Natural killer cell (primary cell): ENCODE measurements at regions of chr2 and their contacts with region 1.

Region 1: DNA sequence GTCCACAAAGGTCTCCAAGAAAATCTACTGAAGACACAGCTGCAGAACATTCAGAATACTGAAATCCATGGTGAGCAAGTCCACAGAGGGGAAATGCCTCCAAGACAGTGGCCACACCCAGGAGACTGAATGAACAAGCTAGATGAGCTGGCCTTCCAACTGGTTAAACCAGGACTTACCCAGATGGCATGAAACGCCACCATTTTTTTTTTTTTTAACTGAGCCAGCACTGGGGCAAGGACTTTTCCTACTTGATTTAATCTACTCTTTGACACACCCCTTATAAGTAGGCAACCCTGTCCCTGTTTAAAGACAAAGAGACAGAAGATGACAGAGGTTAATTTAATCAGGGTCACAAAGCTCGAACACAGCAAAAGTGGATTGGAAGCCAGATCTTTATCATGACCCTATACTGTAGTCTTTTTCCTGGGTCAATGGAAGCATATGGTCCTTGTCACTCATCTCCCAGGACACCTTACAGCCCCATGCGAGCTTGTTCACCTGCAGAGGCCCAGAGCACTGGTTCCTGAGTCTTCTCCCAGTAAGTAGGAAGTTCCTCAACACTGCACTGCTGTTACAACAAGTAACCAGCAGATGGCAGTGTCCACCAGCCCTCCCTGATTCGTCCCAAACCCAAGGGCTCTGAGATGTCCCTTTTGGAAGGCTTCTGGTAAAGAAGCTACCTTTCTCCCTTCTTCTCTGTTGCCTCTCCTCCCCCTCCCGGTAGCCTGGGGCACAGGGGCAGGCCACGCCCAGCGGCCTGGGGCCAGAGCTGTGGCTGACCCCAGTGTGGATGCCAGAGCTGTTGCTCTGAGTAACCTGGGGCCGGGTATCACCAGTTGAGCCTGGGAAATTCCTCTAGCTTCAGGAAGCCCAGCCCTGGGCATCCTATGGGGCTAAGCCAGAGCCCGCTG is 5.6 kb upstream of the GDF7 start:
- DNase-seq: peak; percentile 51 to 87
- ATAC-seq: peak; percentile 85 to 95 (median 89)
- H3K4me3 ChIP-seq: no peak overlapping the region
- H3K4me3 Mint-ChIP-seq: no peak overlapping the region
- H3K27ac ChIP-seq: no peak overlapping the region
- H3K27ac Mint-ChIP-seq: no peak overlapping the region
- H3K4me1 ChIP-seq: peaks cover 12% of the 10 kb centered on the region
- H3K4me1 Mint-ChIP-seq: peaks cover 0 to 4% of the 10 kb centered on the region in 2 donors
- H3K27me3 ChIP-seq: peaks cover 27% of the 10 kb centered on the region
- H3K27me3 Mint-ChIP-seq: peaks cover 59 to 65% of the 10 kb centered on the region in 2 donors
- CTCF ChIP-seq: peak; percentile 97

Region 2: GRCh38 chr2:20822535-20823490 is 161.5 kb after region 1 on chr2 and contains the start of gene LDAH:
- intact Hi-C with region 1: loop called (anchors 2 kb)
- DNase-seq: peak; percentile 86 to 91
- ATAC-seq: peak; percentile 83 to 88 (median 84)
- H3K4me3 ChIP-seq: peak within 1 kb of the TSS; percentile 94
- H3K4me3 Mint-ChIP-seq: peak within 1 kb of the TSS; percentile 96
- H3K27ac ChIP-seq: peak within 1 kb of the TSS; percentile 97
- H3K27ac Mint-ChIP-seq: peak within 1 kb of the TSS; percentile 97 to 99
- H3K4me1 ChIP-seq: peaks cover 5% of the 10 kb centered on the region
- H3K4me1 Mint-ChIP-seq: peaks cover 6 to 18% of the 10 kb centered on the region in 2 donors
- H3K27me3 ChIP-seq: no peaks in the 10 kb centered on the region
- H3K27me3 Mint-ChIP-seq: peaks cover 0 to 1% of the 10 kb centered on the region in 2 donors
- CTCF ChIP-seq: no peak
- total RNA-seq, gene LDAH: 14.5 to 25.6 (median 17.2) TPM

Region 3: DNA sequence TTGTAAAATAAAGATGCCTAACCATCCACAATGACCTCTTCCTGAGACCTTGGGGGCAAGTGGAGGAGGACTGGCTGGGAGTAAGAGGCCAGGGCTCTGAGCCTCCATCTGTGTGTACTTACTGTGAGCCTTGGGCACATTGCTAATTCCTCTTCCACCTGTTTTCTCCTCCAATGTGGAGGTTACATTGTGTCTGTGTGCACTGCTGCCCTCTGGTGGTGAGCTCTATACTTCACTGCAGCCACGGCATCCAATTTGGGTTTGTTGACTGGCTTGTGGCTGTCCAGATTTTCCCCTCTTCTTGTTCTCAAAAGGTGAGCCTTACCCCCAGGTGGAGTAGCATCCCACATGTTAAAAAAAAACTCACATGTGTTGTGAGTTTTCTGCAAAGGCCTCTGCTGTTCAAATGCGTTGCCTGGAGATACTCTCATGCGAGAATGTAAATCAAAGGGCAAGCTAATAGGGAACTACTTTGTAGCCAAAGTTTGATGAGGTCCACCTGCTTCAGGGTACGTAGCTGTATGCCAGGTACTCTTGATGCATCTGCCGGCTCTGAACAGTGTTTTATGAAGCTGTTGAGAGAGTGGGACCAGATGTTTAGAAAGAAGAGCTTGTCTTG is 301.7 kb after region 1 on chr2:
- intact Hi-C with region 1: loop called (anchors 1 kb)
- DNase-seq: peak; percentile 51 to 81
- ATAC-seq: peak in 2 of 3 donors; percentile 76 to 84
- H3K4me3 ChIP-seq: no peak overlapping the region
- H3K4me3 Mint-ChIP-seq: no peak overlapping the region
- H3K27ac ChIP-seq: no peak overlapping the region
- H3K27ac Mint-ChIP-seq: no peak overlapping the region
- H3K4me1 ChIP-seq: no peaks in the 10 kb centered on the region
- H3K4me1 Mint-ChIP-seq: no peaks in the 10 kb centered on the region
- H3K27me3 ChIP-seq: no peaks in the 10 kb centered on the region
- H3K27me3 Mint-ChIP-seq: peaks cover 10 to 24% of the 10 kb centered on the region in 2 donors
- CTCF ChIP-seq: peak; percentile 81